CD8-positive, alpha-beta T cell (primary cell): ENCODE measurements at regions of chr9 and their contacts with region 1.

Region 1: GRCh38 chr9:36572515-36573418 is at the start of gene MELK:
- DNase-seq: peak; percentile 69 to 91 (median 82)
- ATAC-seq: peak; percentile 83
- H3K4me3 ChIP-seq: peak within 1 kb of the TSS; percentile 70
- H3K4me3 Mint-ChIP-seq: peak within 1 kb of the TSS; percentile 87
- H3K27ac ChIP-seq: peak within 1 kb of the TSS; percentile 63 to 72
- H3K27ac Mint-ChIP-seq: peak within 1 kb of the TSS; percentile 55
- H3K4me1 ChIP-seq: peaks cover 10% of the 10 kb centered on the region
- H3K4me1 Mint-ChIP-seq: peaks cover 9% of the 10 kb centered on the region
- H3K27me3 ChIP-seq: no peaks in the 10 kb centered on the region
- H3K27me3 Mint-ChIP-seq: peaks cover 3% of the 10 kb centered on the region
- CTCF ChIP-seq: no peak
- total RNA-seq, gene MELK: 0.24 TPM in 1 of 2 experiments, not detected in the other

Region 2: DNA sequence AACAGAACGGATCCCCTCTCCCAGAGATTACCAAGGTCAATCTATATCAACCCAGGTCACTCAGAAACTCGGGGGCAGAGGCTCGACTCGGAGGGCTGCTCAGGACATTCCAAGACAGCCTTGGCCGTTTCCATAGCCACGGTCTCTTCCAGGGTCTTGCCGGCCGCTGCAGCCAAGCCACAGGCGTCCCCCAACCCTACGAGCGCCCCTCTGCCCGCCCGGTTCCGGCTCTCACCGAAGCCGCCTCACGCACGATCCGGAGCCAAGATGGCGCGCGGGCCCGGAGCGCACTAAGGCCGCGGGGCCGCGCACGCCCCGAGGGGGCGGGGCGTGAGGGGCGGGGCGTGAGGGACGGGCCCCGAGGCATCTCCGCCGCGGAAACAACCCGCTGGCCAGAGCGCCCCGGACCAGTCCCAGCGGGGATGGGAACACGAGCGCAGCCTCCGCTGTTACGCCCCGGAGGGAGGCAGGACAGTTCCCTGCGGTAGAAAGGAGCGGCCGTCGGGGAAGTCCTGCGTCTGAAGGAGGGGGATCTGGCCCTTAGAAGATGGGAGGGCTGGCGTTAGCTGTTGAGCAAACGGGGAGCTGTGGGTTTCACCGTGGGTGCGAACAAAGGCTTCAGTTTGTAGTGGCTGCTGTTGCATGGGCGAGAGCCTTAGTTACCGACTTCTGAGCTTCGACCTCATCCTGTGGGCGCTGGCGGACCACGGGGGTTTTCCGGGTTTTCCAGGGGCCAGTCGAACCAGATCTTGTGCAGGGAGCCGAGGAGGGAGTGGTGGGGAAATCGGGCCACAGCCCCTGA is 1960.7 kb before region 1 on chr9 and contains the start of gene RPP25L:
- CTCF ChIA-PET with region 1: no interaction called
- POLR2A ChIA-PET with region 1: no interaction called
- intact Hi-C with region 1: loop called in 1 of 2 experiments (anchors 5 kb)
- DNase-seq: peak; percentile 65 to 92 (median 85)
- ATAC-seq: peak; percentile 95
- H3K4me3 ChIP-seq: peak within 1 kb of the TSS; percentile 88 to 93
- H3K4me3 Mint-ChIP-seq: peak within 1 kb of the TSS; percentile 85
- H3K27ac ChIP-seq: peak within 1 kb of the TSS; percentile 77 to 91
- H3K27ac Mint-ChIP-seq: peak within 1 kb of the TSS; percentile 91
- H3K4me1 ChIP-seq: peaks cover 17% of the 10 kb centered on the region
- H3K4me1 Mint-ChIP-seq: peaks cover 23% of the 10 kb centered on the region
- H3K27me3 ChIP-seq: no peaks in the 10 kb centered on the region
- H3K27me3 Mint-ChIP-seq: no peaks in the 10 kb centered on the region
- CTCF ChIP-seq: no peak
- total RNA-seq, gene RPP25L: 4.4 to 5.1 TPM

Region 3: DNA sequence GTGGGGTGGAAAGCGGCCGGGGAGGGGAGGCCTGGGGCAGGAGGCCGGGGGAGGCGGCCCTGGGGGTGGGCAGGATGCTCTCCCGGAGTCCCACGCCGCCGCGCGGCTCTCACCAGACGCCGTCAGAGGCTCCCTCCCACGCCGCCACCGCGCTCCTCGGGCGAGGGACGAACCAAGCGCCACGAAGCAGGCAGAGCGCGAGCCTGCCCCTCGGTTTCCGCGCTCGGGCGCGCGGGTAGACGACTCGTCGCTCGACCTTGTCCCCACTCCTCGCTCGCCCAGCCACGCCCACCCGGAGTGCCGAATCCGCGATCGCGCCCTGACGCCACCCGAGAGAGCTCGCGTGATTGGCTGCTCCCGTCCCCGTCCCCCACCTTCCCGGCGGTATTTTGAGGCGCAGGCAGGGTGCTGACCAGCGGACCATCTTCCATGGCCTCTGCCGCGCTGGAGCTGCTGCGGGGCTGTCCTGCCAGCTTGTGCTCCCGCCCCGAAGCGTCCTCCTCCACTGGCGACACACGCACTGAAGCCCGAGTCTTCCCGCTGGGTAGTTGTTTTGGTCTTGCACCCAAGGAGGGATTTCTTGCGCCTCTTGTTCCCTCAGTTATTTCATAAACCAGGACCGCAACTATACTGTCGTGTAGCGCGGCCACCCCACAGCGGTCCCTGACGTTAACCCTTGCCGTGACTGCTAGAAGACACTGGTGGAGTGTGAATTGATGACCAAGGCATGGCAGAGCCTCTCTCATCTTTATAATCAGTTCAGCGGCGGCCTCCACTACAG is 314.4 kb before region 1 on chr9 and contains the start of gene GNE:
- CTCF ChIA-PET with region 1: no interaction called
- POLR2A ChIA-PET with region 1: no interaction called
- intact Hi-C with region 1: loop called (anchors 2 to 5 kb)
- DNase-seq: peak; percentile 95 to 99 (median 98)
- ATAC-seq: peak; percentile 89
- H3K4me3 ChIP-seq: peak within 1 kb of the TSS; percentile 85 to 100
- H3K4me3 Mint-ChIP-seq: peak within 1 kb of the TSS; percentile 98
- H3K27ac ChIP-seq: peak within 1 kb of the TSS; percentile 90 to 91
- H3K27ac Mint-ChIP-seq: peak within 1 kb of the TSS; percentile 97
- H3K4me1 ChIP-seq: peaks cover 17% of the 10 kb centered on the region
- H3K4me1 Mint-ChIP-seq: peaks cover 16% of the 10 kb centered on the region
- H3K27me3 ChIP-seq: no peaks in the 10 kb centered on the region
- H3K27me3 Mint-ChIP-seq: no peaks in the 10 kb centered on the region
- CTCF ChIP-seq: no peak
- total RNA-seq, gene GNE: 17.3 to 17.4 TPM

Region 4: DNA sequence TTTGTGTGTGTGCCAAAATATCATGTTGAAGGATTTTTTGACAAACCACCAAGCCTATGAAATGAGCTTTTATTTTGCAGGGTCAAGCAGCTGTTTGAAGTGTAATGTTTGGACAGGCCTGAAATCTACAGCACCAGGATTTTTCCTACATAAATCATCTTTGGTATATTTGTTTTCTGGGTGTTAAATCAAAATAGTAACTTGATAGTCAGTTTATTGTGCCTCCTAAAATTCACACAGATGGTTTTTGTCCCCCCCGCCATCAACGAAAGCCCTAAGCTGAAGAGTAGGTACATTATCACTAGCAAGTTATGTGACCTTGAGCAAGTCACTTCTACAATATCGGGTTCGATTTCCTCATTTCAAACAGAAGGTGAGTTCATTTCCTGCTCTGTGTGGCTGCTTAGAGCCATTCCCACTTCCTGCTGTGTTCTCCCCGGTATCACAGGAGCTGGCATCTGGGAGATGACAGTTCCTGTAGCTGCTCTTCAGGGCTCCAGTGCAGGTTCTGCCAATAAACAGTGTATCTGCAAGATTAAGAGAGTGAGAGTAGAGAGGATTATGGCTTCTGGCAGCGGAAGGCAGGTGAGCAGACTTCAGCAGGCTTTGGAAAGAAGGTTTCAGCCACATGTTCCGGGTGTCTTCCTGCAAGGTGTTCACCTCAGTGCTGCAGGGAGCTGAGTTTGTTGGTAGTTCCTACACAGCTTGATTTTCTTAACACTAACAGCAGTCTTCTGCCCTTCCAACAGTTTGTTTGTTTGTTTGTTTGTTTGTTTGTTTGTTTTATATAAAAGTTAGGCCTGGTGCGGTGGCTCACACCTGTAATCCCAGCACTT is 266.1 kb before region 1 on chr9:
- CTCF ChIA-PET with region 1: no interaction called
- POLR2A ChIA-PET with region 1: no interaction called
- intact Hi-C with region 1: no loop called
- DNase-seq: no peak
- ATAC-seq: no peak
- H3K4me3 ChIP-seq: no peak overlapping the region
- H3K4me3 Mint-ChIP-seq: peak overlapping the region; percentile 36
- H3K27ac ChIP-seq: no peak overlapping the region
- H3K27ac Mint-ChIP-seq: peak overlapping the region; percentile 7
- H3K4me1 ChIP-seq: peaks cover 7% of the 10 kb centered on the region
- H3K4me1 Mint-ChIP-seq: peaks cover 8% of the 10 kb centered on the region
- H3K27me3 ChIP-seq: no peaks in the 10 kb centered on the region
- H3K27me3 Mint-ChIP-seq: no peaks in the 10 kb centered on the region
- CTCF ChIP-seq: no peak

Region 5: GRCh38 chr9:36551129-36551528 is 21.6 kb before region 1 on chr9:
- CTCF ChIA-PET with region 1: interaction called, 19 read pairs
- POLR2A ChIA-PET with region 1: no interaction called
- intact Hi-C with region 1: loop called in 1 of 2 experiments (anchors 1 kb)
- DNase-seq: no peak
- ATAC-seq: no peak
- H3K4me3 ChIP-seq: no peak overlapping the region
- H3K4me3 Mint-ChIP-seq: no peak overlapping the region
- H3K27ac ChIP-seq: no peak overlapping the region
- H3K27ac Mint-ChIP-seq: no peak overlapping the region
- H3K4me1 ChIP-seq: no peaks in the 10 kb centered on the region
- H3K4me1 Mint-ChIP-seq: peaks cover 3% of the 10 kb centered on the region
- H3K27me3 ChIP-seq: no peaks in the 10 kb centered on the region
- H3K27me3 Mint-ChIP-seq: no peaks in the 10 kb centered on the region
- CTCF ChIP-seq: no peak

Region 6: GRCh38 chr9:36748322-36748899 is 175.6 kb after region 1 on chr9:
- CTCF ChIA-PET with region 1: no interaction called
- POLR2A ChIA-PET with region 1: no interaction called
- intact Hi-C with region 1: no loop called
- DNase-seq: peak in 3 of 9 experiments; percentile 12 to 20 (median 17)
- ATAC-seq: no peak
- H3K4me3 ChIP-seq: no peak overlapping the region
- H3K4me3 Mint-ChIP-seq: no peak overlapping the region
- H3K27ac ChIP-seq: no peak overlapping the region
- H3K27ac Mint-ChIP-seq: no peak overlapping the region
- H3K4me1 ChIP-seq: no peaks in the 10 kb centered on the region
- H3K4me1 Mint-ChIP-seq: no peaks in the 10 kb centered on the region
- H3K27me3 ChIP-seq: peaks cover 0 to 2% of the 10 kb centered on the region in 2 experiments
- H3K27me3 Mint-ChIP-seq: peaks cover 55% of the 10 kb centered on the region
- CTCF ChIP-seq: no peak

Region 7: DNA sequence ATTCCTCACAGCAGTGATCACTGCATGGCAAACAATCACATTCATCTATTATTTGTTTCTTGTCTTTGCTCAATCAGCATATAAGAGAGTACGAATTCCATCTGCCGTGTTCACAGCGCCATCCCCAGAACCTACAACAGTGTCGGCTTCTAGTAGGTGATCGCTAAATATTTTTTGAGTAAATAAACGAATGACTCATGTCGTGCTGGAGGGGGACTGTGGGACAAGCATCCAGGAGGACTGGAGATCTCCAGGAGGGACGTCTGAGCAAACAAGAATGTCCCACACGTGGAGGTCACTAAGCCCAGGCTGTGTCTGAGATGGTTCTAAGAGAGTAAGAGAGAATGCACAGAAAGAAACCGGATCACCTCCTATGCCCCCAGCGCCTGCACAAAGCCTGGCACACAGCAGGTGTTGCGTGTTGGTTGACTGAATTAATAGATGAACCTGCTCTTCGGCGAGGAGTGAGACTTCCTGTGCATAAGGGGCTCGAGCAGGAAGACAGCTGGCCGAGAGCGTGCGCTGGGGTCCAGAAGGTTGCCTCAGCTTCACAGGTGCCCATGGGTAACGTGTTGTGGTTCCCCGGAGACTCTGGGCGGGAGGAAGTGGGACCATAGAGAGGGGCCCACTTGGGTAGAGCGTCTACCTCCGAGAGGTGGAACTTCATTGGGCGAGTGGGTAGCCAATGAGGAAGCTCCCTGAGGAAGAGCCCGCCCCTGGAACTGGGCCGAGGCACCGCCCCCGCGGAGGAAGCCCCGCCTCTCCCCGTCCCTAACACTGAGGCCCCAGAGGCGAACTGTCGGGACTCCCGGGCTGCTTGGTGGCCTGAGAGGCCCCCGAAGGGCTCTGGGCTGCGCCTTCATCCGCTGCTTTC is 192.9 kb after region 1 on chr9:
- CTCF ChIA-PET with region 1: no interaction called
- POLR2A ChIA-PET with region 1: no interaction called
- intact Hi-C with region 1: loop called in 1 of 2 experiments (anchors 2 kb)
- DNase-seq: peak; percentile 68 to 95 (median 89)
- ATAC-seq: peak; percentile 99
- H3K4me3 ChIP-seq: peak overlapping the region; percentile 47 to 54
- H3K4me3 Mint-ChIP-seq: no peak overlapping the region
- H3K27ac ChIP-seq: peak overlapping the region; percentile 23 to 39
- H3K27ac Mint-ChIP-seq: peak overlapping the region; percentile 71
- H3K4me1 ChIP-seq: peaks cover 6% of the 10 kb centered on the region
- H3K4me1 Mint-ChIP-seq: peaks cover 6% of the 10 kb centered on the region
- H3K27me3 ChIP-seq: peaks cover 0 to 7% of the 10 kb centered on the region in 2 experiments
- H3K27me3 Mint-ChIP-seq: peaks cover 5% of the 10 kb centered on the region
- CTCF ChIP-seq: no peak

Region 8: DNA sequence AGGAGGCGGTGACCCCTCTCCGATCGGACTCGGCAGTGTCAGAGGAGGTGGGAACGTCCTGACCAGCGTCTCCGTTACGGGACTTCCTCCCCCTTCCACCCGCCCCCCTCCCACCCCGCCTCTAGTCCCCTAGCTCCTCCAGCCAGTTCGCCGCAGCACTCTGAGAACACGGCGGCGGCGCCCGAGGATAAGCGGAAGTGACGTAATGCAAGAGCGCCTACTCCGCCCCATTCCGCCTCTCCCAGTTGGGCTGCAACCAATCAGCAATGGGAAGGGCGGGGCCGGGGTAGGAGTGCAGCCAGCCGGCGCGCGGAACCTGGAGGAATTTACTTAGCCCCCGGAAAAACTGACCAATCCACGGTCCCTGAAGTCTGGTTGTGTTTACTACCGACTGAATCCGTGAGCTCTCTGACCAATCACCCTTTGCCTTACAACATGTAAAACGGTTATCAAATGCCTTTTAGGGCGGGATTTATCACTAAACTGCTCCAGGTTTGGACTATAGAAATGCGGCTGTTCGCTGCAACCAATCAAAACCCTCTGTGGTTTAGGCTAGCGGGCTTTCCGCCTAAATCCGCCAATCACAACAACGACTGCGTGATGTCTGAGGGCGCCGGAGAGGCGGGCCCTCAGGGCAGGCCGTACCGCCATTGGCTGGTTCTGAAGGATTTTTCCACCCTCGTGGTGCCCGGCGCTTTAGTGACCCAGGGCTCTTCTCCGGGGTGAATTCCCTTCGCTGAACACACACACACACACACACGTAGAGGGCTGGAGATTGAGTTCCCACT is 892.7 kb after region 1 on chr9 and contains the start of gene ZBTB5:
- CTCF ChIA-PET with region 1: no interaction called
- POLR2A ChIA-PET with region 1: no interaction called
- intact Hi-C with region 1: loop called in 1 of 2 experiments (anchors 2 kb)
- DNase-seq: peak; percentile 97 to 100 (median 99)
- ATAC-seq: peak; percentile 79
- H3K4me3 ChIP-seq: peak within 1 kb of the TSS; percentile 91 to 97
- H3K4me3 Mint-ChIP-seq: peak within 1 kb of the TSS; percentile 95
- H3K27ac ChIP-seq: peak within 1 kb of the TSS; percentile 86 to 97
- H3K27ac Mint-ChIP-seq: peak within 1 kb of the TSS; percentile 98
- H3K4me1 ChIP-seq: peaks cover 23% of the 10 kb centered on the region
- H3K4me1 Mint-ChIP-seq: peaks cover 40% of the 10 kb centered on the region
- H3K27me3 ChIP-seq: no peaks in the 10 kb centered on the region
- H3K27me3 Mint-ChIP-seq: no peaks in the 10 kb centered on the region
- CTCF ChIP-seq: no peak
- total RNA-seq, gene ZBTB5: 18.5 to 18.7 TPM